ENCODE measurements at regions of chrX and their contacts with region 1.

Region 1: DNA sequence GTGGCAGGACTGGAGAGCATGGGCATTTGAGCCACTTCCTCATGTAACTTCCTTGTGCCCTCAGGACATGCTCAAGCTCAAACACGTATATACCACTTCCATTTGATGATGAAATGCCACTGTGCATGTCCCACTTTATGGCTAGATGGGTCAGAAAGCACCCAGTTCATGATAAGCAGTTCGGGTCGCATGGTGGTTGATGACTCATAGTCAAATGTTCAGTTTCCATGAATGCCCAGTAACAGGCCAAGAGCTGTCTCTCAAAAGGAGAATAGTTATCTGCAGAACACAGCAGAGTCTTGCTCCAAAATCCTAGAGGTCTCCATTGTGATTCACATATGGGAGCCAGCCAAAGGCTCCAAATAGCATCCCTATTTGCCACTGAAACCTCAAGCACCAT is 48.9 kb upstream of the SPIN3 start:
- DNase-seq: no peak

Region 2: DNA sequence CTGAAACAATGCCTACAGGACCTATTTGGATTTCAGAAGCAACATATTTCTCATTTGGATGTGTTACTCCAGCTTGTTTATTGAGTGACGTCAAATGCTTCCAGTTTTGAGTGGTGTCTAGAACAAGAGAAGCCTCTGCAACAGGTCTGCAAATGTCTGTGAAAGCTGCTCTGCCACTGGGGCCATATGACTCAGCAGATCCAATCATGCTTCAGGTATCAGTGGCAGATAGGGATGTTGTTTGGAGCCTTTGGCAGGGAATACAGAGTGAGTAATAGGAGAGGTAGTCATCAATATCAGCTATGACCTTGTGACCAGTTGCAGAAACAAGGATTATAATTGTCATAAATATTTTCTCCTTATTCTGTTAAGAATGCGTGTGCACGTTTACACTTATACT is 1007.1 kb after region 1 on chrX:
- intact Hi-C with region 1: loop called in 1 of 2 experiments (anchors 10 kb)
- DNase-seq: no peak